ENCODE measurements at regions of chr5 and their contacts with region 1.

Region 1: DNA sequence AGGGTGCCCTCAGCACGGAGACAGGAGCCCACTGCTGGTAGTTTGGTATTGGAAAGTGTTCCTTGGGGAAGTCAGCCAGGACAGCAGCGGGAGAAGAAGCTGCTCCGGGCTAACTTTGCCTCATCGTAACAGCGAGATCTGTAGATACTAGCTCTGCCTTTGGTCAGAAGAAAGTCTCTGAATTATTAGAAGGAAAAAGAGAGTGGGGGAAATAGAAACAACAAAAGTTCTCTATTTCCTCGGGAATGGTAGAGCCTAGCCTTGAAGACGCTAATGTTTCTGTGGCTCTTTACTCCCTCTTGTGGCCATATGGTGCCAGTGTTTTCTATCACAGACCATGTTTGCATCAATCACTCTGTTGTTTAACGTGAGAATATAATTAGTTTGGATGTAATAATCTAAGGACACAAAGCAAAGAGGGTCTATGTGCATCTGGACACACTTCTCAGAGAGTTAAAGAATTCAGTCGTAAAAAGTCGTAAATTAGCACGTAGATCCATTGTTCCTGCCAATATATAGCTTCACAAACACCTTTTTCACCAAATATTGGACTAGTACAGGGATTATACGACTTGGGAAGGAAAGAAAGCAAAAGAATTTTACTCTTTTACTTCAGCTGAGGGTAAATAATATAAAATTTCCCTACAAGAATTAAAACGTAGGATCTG is 40.2 kb upstream of the HSD17B4 start:
- DNase-seq: peak; percentile 71
- H3K4me3 ChIP-seq: peak overlapping the region; percentile 49 to 62 (median 54)
- H3K27ac ChIP-seq: peak overlapping the region; percentile 97
- H3K4me1 ChIP-seq: peaks cover 12% of the 10 kb centered on the region
- H3K27me3 ChIP-seq: no peaks in the 10 kb centered on the region
- CTCF ChIP-seq: peak; percentile 71 to 97

Region 2: GRCh38 chr5:119022017-119022745 is 389.9 kb before region 1 on chr5:
- CTCF ChIA-PET with region 1: interaction called, 8 read pairs
- dilution Hi-C with region 1: loop called (anchors 25 kb)
- in situ Hi-C with region 1: loop called (anchors 10 to 25 kb)
- intact Hi-C with region 1: loop called (anchors 1 kb)
- DNase-seq: peak; percentile 25
- H3K4me3 ChIP-seq: no peak overlapping the region
- H3K27ac ChIP-seq: no peak overlapping the region
- H3K4me1 ChIP-seq: no peaks in the 10 kb centered on the region
- H3K27me3 ChIP-seq: no peaks in the 10 kb centered on the region
- CTCF ChIP-seq: peak; percentile 39 to 60

Region 3: DNA sequence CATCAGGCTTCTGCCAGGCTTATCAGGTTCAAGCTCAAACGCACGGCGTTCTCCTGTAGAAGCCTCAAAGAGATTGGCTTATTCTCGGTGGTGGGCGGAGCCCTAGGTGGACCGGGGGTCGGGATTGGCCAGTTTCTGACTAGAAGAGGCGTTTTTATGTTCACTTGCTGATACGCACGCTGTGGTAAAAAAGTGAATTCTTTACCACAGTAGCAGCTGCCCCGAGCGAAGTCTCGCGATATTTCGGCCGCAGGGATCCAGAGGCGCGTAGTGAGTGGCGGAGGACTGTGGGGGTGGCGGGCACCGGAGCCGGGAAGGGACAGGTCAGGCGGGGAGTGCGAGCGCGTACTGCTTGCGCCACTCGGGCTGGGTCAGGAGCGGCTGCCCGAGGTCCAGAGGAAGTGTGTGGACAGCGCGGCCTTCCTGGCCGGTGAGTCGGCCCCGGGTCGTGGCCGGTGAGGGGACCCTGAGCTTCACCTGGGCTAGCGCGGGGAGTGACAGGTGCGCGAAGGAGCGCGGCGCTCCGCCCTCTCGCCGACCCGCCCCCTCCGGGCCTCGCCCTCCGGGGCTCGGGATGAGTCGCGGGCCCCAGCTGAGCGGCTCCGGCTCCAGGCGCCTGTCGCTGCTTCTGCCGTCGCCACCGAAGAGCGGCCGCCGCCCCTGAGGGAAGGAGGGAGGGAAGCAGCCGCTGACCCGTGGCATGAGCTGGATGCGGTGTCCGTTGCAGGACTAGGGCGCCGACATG is 341.1 kb before region 1 on chr5 and contains the start of gene DMXL1:
- CTCF ChIA-PET with region 1: no interaction called
- dilution Hi-C with region 1: no loop called
- in situ Hi-C with region 1: no loop called
- intact Hi-C with region 1: loop called (anchors 1 kb)
- DNase-seq: peak; percentile 99
- H3K4me3 ChIP-seq: peak within 1 kb of the TSS; percentile 94 to 98 (median 98)
- H3K27ac ChIP-seq: peak within 1 kb of the TSS; percentile 92
- H3K4me1 ChIP-seq: peaks cover 8% of the 10 kb centered on the region
- H3K27me3 ChIP-seq: no peaks in the 10 kb centered on the region
- CTCF ChIP-seq: no peak
- total RNA-seq, gene DMXL1: 26.0 to 62.2 TPM

Region 4: GRCh38 chr5:119315516-119315949 is 96.5 kb before region 1 on chr5:
- CTCF ChIA-PET with region 1: interaction called, 4 read pairs
- dilution Hi-C with region 1: no loop called
- in situ Hi-C with region 1: no loop called
- intact Hi-C with region 1: loop called (anchors 1 kb)
- DNase-seq: peak; percentile 50
- H3K4me3 ChIP-seq: no peak overlapping the region
- H3K27ac ChIP-seq: peak overlapping the region; percentile 3
- H3K4me1 ChIP-seq: peaks cover 14% of the 10 kb centered on the region
- H3K27me3 ChIP-seq: no peaks in the 10 kb centered on the region
- CTCF ChIP-seq: peak; percentile 47 to 63

Region 5: DNA sequence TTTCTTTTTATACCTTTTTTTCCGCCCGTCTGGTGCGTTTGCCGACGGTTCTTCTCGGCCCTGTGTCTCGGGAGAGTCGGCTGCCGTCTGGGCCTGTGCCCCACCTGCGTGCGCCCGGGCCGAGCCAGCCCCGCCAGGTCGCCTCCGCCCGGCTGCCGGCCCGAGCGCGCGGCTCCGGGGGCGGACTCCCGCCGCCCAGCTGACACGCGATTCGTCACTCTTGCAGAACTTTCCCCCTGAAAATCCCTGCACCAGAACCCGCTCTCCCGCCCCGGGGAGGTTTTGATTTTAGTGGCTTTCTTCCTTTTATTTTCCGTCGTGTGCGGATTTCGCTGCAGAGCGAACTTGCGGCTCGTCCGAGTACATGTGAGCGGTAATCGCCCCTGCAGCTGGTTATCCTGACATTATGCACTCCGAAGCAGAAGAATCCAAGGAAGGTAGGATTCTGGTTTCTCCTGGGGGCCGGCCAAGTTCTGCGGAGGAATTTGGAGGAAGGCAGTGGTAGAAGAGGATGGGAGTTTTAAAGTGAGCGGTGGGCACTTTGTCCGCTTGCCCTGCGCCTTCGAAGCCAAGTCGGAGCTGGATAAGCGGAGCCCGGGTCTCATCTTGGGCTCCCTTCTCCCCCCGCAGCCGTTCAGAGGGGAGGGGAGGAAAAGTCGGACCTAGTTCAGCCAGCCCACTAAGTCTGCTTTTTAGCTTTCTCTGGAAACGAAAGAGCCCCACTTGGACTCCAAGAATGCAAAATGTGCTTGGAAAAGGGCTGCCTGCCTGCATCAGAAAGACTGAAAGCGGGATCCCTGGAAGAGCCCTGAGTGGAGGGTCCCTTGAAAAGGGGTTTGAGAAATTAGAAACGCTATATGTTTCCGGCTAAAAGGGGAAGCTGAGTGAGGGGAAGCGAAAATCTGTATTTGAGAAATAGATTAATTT is 56.1 kb before region 1 on chr5 and contains the start of gene TNFAIP8:
- CTCF ChIA-PET with region 1: interaction called, 12 read pairs
- dilution Hi-C with region 1: loop called (anchors 5 kb)
- in situ Hi-C with region 1: no loop called
- intact Hi-C with region 1: loop called (anchors 1 kb)
- DNase-seq: peak; percentile 76
- H3K4me3 ChIP-seq: peak within 1 kb of the TSS; percentile 69 to 77 (median 71)
- H3K27ac ChIP-seq: peak within 1 kb of the TSS; percentile 77
- H3K4me1 ChIP-seq: peaks cover 40% of the 10 kb centered on the region
- H3K27me3 ChIP-seq: no peaks in the 10 kb centered on the region
- CTCF ChIP-seq: no peak
- total RNA-seq, gene TNFAIP8: 11.3 to 15.9 TPM

Measured in mammary epithelial cell (primary cell).